Sigmoid colon (tissue), 7 donors: ENCODE measurements at regions of chr6 and their contacts with region 1.

Region 1: DNA sequence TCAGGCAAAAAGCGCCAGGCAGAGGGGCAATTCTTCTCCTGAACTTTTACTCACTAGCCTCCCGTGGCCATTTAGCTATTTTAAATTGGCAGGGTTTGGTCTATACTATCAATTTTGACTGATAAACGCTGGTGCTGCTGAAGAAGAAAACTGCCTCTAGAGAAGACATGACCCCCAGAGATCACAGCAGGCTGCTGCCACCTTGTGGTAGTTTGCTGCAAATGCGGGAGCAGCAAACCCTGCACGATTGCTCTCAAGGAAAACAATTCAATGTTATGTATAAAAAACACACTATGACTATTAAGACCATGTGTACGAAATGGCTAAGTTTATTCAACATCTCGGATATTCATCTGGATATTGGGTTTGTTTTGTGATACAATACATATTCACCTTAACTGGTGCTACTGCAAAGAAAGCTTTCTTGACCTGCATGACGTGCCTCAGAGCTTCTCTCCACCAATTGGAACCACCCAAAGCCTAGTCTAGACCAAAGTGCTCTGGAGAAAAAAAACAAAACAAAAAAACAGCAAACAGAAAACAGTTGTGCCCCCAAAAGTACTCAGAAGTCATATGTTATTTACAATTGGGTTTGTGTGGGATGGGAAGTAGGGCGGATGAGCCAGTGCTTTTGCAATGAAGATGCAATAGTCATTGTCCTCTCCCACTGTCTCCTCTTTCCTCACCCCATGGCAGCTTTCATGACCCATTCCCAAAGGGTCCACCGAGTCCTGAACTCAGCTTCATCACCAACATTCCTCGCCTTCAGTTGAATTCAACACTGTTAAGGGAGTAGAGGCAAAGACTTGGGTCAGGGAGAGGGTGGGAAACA is 19.6 kb upstream of the IL17F start:
- DNase-seq: no peak
- H3K4me3 ChIP-seq: no peak overlapping the region
- H3K27ac ChIP-seq: no peak overlapping the region
- H3K4me1 ChIP-seq: peaks cover 0 to 15% (median 5%) of the 10 kb centered on the region in 4 donors
- H3K27me3 ChIP-seq: no peaks in the 10 kb centered on the region
- CTCF ChIP-seq: peak; percentile 30 to 89 (median 64)
- EP300 ChIP-seq: no peak
- POLR2A ChIP-seq: no peak

Region 2: GRCh38 chr6:52063584-52064344 is 200.2 kb before region 1 on chr6:
- intact Hi-C with region 1: loop called (anchors 10 kb)
- DNase-seq: no peak
- H3K4me3 ChIP-seq: no peak overlapping the region
- H3K27ac ChIP-seq: no peak overlapping the region
- H3K4me1 ChIP-seq: no peaks in the 10 kb centered on the region
- H3K27me3 ChIP-seq: no peaks in the 10 kb centered on the region
- CTCF ChIP-seq: peak in 1 of 4 experiments; percentile 6
- EP300 ChIP-seq: no peak
- POLR2A ChIP-seq: no peak

Region 3: GRCh38 chr6:52162940-52163908 is 100.7 kb before region 1 on chr6:
- intact Hi-C with region 1: loop called (anchors 2 kb)
- DNase-seq: no peak
- H3K4me3 ChIP-seq: no peak overlapping the region
- H3K27ac ChIP-seq: no peak overlapping the region
- H3K4me1 ChIP-seq: no peaks in the 10 kb centered on the region
- H3K27me3 ChIP-seq: no peaks in the 10 kb centered on the region
- CTCF ChIP-seq: peak in 2 of 4 experiments; percentile 24 to 48
- EP300 ChIP-seq: no peak
- POLR2A ChIP-seq: no peak

Region 4: GRCh38 chr6:52304983-52305390 is 41.1 kb after region 1 on chr6:
- intact Hi-C with region 1: no loop called
- DNase-seq: no peak
- H3K4me3 ChIP-seq: no peak overlapping the region
- H3K27ac ChIP-seq: peak overlapping the region; percentile 52 to 71 (median 65)
- H3K4me1 ChIP-seq: peaks cover 0 to 27% (median 23%) of the 10 kb centered on the region in 4 donors
- H3K27me3 ChIP-seq: no peaks in the 10 kb centered on the region
- CTCF ChIP-seq: no peak
- EP300 ChIP-seq: no peak
- POLR2A ChIP-seq: no peak